ENCODE measurements at regions of chr1 and their contacts with region 1.

Region 1: DNA sequence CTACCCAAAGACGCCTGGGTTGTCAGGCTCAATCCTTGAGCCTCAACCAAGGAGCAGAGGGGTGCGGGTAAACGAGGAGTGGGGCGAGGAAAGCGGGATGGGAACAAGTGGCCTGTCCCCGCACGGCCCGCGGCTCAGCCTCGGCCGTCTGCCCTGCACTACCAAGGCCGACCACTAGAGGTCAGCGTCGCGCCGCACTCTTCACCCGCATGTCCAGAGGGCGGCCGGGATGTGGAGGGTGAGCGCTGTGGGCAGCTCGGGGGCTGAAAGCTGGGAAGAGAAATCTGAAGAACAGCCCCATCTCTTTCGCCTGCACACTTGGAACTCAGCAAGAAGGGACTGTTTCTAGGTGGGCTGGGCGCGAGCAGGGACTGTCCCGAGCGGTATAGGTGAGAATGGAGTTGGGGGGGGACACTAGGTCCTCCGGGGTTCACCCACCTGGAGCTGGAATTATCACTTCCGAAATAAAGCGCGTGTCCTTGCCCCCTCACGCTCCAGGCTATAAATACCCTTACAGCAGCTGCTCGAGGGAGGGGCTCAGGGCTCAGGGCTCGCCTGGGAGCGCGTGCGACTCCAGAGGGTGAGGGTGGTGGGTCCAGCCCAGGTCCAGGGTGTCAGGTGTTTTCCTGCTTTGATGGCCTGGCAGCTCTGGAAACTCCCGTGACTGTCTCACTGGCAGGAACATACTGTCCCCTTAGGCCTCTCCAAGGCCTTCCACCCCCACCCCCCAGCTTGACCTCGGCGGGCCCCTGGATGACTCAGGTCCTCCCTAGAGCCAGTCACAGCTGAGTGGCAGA is 9.8 kb downstream of the SLC30A2 start:
- DNase-seq: peak; percentile 74
- H3K4me3 Mint-ChIP-seq: peak overlapping the region; percentile 94
- H3K27ac Mint-ChIP-seq: no peak overlapping the region
- H3K4me1 Mint-ChIP-seq: peaks cover 10% of the 10 kb centered on the region
- H3K27me3 Mint-ChIP-seq: peaks cover 25% of the 10 kb centered on the region

Region 2: DNA sequence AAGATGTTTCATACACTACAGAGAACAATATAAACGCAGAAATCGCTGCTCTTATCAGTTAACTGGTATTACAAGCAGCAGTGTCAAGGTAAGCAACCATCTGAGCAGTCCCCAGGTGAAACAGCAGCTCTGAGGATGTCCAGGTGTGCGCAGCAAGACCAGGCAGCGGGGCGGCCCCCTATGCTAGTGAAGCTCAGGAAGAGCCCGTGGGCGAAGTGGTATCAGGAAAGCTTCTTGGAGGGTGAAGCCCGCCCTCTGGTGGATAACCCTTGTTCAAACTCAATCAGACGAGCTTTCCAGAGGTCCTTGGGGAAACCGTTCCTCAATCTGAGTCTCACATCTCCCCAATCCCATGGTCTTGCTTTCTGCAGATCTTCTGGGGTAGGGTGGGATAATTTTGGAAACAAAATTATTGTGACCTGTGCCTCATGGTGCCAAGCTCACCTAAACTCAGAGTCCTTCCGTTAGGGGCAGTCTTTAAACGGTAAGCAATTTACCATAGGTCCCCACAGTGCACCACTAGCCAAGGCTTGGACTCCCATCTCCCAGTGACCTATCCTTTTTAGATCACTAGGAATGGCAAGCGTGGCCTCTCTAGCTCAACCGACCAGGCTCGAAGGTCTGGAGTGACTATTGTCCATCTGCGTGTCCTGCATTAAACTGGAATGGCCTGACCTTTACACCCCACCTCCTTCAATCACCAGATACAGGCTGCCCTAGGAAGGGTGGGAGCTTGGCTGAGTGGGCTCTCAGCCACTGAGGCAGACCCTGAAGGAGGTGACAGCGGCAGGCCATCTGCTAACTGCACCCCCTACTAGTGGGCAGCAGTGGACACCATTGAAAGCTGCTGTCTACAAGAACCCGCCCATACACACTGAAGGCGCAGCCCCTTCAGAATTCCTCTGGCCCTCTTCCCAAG is 109.1 kb after region 1 on chr1:
- intact Hi-C with region 1: loop called (anchors 2 kb)
- DNase-seq: peak; percentile 66
- H3K4me3 Mint-ChIP-seq: no peak overlapping the region
- H3K27ac Mint-ChIP-seq: no peak overlapping the region
- H3K4me1 Mint-ChIP-seq: peaks cover 4% of the 10 kb centered on the region
- H3K27me3 Mint-ChIP-seq: peaks cover 27% of the 10 kb centered on the region

Measured in activated T-helper 2 cell treated with anti-CD3 and anti-CD28 coated beads, Interferon-gamma antibody, Interleukin-2, Interleukin-4, amounts not matched to agents 10 μg/mL and 5 μg/mL and 100 μg/mL, durations not matched to agents 14 hours and 24 hours and 36 hours (primary cell).